ENCODE measurements at regions of chr11 and their contacts with region 1.

Region 1: DNA sequence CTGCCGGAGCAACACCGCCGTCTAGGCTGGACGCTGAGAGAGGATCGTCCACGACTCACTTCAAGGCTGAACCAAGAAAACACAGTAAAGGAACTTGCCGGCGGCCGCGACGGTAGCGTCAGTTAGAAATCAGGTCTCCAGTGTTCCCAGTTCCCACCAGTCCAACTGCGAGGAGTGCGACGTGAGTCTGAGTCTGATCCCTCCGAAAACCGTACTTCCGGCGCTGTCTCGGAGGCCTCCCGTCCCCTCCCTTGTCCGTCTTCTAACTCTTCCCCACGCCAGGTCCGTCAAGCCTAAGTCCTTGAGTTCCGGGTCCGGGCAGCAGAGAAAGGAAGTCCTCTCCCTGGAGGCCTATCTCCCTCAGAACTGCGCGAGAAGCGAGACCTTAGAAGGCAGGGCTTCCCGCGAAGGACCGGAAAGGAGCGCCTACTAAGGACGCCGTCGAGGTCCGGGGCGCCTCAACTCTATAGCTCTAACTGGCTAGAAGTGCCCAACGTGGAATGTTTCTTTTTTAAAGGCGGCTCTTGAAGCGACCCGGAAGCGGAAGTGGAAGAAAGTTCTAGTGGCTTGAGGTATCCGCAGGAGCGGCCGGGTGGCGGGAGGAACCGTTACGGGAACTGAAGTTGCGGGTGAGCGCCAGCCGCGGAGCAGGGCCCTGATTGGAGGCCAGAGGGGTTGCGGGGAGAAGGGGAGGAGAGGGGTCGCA is at the starts of genes BANF1 and EIF1AD:
- DNase-seq: peak; percentile 96
- total RNA-seq, gene BANF1: 195 TPM
- total RNA-seq, gene EIF1AD: 18.1 TPM

Region 2: GRCh38 chr11:65711785-65712632 is 290.1 kb before region 1 on chr11 and contains the start of gene KAT5:
- intact Hi-C with region 1: loop called (anchors 5 kb)
- DNase-seq: peak; percentile 99
- total RNA-seq, gene KAT5: 49.2 TPM

Region 3: GRCh38 chr11:65849771-65850216 is 152.3 kb before region 1 on chr11:
- intact Hi-C with region 1: no loop called
- DNase-seq: peak; percentile 70

Region 4: GRCh38 chr11:65919146-65920033 is 82.7 kb before region 1 on chr11 and contains the start of gene DRAP1:
- intact Hi-C with region 1: loop called (anchors 5 kb)
- DNase-seq: peak; percentile 100
- total RNA-seq, gene DRAP1: 113 TPM

Region 5: DNA sequence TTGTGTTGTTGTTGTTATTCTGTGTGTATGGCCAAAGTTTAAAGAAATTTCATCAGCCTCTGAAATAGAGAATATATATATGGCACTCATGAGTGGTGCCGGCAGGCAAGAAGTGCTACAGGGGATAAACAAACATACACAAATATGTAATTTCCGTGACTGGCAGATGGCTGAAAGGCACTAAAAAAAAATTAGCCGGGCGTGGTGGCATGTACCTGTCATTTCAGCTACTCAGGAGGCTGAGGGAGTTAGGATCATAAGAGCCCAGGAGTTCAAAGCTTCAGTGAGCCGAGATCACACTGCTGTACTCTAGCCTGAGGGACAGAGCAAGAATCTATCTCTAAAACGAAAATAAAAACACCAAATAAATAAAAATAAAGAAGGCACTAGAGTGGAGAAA is 159.0 kb after region 1 on chr11:
- intact Hi-C with region 1: no loop called
- DNase-seq: no peak

Measured in cardiac septum (tissue), 1 donor.